ENCODE measurements at regions of chr16 and their contacts with region 1.

Region 1: GRCh38 chr16:85759631-85760419 is 8.9 kb upstream of the C16orf74 start:
- DNase-seq: peak; percentile 75
- H3K4me3 ChIP-seq: peak overlapping the region; percentile 46
- H3K27ac ChIP-seq: peak overlapping the region; percentile 90
- H3K4me1 ChIP-seq: peaks cover 73% of the 10 kb centered on the region
- CTCF ChIP-seq: peak; percentile 87

Region 2: DNA sequence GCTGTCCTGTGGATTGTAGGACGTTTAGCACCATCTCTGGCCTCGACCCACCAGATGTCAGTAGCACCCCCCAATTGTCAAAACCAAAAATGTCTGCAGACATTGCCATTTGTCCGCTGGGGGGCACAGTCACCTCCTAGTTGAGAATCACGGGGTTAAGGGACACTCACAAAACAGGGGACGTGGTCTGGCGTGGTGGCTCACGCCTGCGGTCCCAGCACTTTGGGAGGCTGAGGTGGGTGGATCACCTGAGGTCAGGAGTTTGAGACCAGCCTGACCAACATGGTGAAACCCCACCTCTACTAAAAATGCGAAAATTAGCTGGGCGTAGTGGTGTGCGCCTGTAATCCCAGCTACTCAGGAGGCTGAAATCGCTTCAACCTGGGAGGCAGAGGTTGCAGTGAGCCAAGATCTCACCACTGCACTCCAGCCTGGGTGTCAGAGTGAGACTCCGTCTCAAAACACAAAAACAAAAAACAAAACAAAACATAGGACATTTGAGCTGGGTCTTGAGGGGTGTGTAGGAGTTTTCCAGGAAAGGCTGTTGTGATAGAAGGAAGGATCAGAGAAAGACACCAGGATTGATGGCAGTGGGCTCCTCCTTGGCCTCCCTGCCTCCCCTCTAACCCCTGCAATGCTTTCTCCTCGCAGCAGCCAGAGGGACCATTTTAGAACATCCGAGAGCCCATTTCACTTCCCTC is 318.5 kb before region 1 on chr16:
- CTCF ChIA-PET with region 1: interaction called, 19 read pairs
- POLR2A ChIA-PET with region 1: no interaction called
- intact Hi-C with region 1: no loop called
- DNase-seq: peak; percentile 61
- H3K4me3 ChIP-seq: no peak overlapping the region
- H3K27ac ChIP-seq: no peak overlapping the region
- H3K4me1 ChIP-seq: peaks cover 22% of the 10 kb centered on the region
- CTCF ChIP-seq: peak; percentile 68

Region 3: DNA sequence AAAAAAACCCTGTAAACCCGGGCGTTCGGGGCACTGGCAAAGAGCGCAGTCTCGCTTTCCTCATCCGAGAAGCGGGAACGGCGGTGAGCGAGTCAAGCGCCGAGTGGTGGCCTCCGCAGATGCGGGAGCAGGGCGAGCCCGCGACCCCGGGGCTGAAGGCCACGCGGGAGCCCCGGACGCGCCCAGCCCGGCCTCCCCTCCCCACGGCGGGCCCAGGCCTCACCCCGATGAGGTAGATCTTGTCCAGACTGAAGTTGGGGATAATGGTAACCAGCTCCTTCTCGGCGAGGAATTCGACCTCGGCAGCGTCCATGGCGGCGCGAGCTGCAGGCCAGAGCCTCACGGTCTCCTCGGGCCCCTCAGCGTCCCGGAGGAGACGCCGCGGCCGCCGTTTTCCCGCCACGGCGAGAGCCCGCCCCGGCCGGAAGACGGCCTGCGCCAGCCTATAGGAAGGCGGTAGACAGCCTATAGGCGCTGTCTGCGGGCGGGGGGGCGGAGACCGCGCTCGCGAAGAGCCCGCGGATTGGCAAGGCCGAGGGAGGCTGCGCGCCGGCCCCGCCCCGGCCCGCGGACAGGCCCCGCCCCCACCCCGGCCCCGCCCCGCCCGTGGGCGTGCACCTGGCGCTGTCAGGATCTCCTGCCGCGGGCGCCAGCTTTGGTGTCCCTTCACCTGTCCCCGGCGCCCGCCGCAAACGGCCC is 71.1 kb before region 1 on chr16 and contains the start of gene GINS2:
- CTCF ChIA-PET with region 1: no interaction called
- POLR2A ChIA-PET with region 1: interaction called, 3 read pairs
- intact Hi-C with region 1: loop called (anchors 2 kb)
- DNase-seq: peak; percentile 97
- H3K4me3 ChIP-seq: peak within 1 kb of the TSS; percentile 87
- H3K27ac ChIP-seq: peak within 1 kb of the TSS; percentile 90
- H3K4me1 ChIP-seq: peaks cover 50% of the 10 kb centered on the region
- CTCF ChIP-seq: no peak
- total RNA-seq, gene GINS2: 74.3 and 80.9 TPM in 2 replicates

Region 4: DNA sequence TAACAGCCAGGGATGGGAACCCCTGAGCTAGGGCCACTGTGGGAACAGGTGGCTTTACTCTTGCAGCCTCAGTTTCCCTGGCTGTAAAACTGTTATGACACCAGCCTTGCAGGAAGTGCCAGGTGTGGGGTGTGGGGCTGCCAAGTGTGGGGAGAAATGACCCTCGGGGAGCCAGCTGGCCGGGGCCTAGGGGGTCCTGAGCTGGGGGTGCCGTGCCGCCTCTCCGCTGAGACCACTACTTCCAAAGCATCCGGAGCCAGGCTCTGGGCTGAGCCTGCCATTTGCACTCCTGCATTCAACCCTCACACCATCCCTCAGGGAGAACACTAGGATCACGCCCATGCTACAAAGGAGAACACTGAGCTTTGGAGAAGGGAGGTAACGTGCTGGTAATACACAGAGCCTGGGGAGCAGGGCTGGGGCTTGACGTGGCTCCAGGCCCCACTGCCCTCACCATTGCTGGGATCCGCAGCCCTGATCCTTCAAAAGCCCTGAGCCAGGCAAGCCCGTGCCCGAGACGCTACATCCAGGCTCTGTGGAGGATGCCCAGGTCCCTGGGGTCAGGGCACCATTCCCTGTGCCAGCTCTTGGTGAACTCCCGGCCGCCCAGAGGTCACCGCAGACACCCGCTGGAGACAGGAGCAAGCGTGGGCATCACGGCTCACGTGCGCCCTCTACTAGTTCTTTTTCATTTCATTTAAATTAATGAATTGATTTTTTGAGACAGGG is 42.3 kb before region 1 on chr16:
- CTCF ChIA-PET with region 1: interaction called, 5 read pairs
- POLR2A ChIA-PET with region 1: interaction called, 3 read pairs
- intact Hi-C with region 1: loop called (anchors 1 kb)
- DNase-seq: peak; percentile 84
- H3K4me3 ChIP-seq: no peak overlapping the region
- H3K27ac ChIP-seq: no peak overlapping the region
- H3K4me1 ChIP-seq: peaks cover 8% of the 10 kb centered on the region
- CTCF ChIP-seq: peak; percentile 88

Region 5: GRCh38 chr16:85735225-85735635 is 24.6 kb before region 1 on chr16:
- CTCF ChIA-PET with region 1: interaction called, 6 read pairs
- POLR2A ChIA-PET with region 1: interaction called, 9 read pairs
- intact Hi-C with region 1: loop called (anchors 1 kb)
- DNase-seq: peak; percentile 88
- H3K4me3 ChIP-seq: peak overlapping the region; percentile 20
- H3K27ac ChIP-seq: peak overlapping the region; percentile 60
- H3K4me1 ChIP-seq: peaks cover 31% of the 10 kb centered on the region
- CTCF ChIP-seq: no peak

Region 6: GRCh38 chr16:85799497-85800337 is 39.9 kb after region 1 on chr16 and contains the starts of genes COX4I1 and EMC8:
- CTCF ChIA-PET with region 1: no interaction called
- POLR2A ChIA-PET with region 1: interaction called, 3 read pairs
- intact Hi-C with region 1: loop called (anchors 2 kb)
- DNase-seq: peak; percentile 95
- H3K4me3 ChIP-seq: peak within 1 kb of the TSS; percentile 95
- H3K27ac ChIP-seq: peak within 1 kb of the TSS; percentile 53
- H3K4me1 ChIP-seq: peaks cover 23% of the 10 kb centered on the region
- CTCF ChIP-seq: no peak
- total RNA-seq, gene COX4I1: 569 and 633 TPM in 2 replicates
- total RNA-seq, gene EMC8: 37.6 and 54.0 TPM in 2 replicates

Measured in OCI-LY7 (cell line).